ENCODE measurements at regions of chr11 and their contacts with region 1.

Region 1: GRCh38 chr11:6637871-6638270 is 17.7 kb downstream of the DCHS1 start:
- DNase-seq: no peak

Region 2: GRCh38 chr11:6596239-6596877 is 41.5 kb before region 1 on chr11:
- intact Hi-C with region 1: loop called in 1 of 2 experiments (anchors 1 kb)
- DNase-seq: no peak

Region 3: DNA sequence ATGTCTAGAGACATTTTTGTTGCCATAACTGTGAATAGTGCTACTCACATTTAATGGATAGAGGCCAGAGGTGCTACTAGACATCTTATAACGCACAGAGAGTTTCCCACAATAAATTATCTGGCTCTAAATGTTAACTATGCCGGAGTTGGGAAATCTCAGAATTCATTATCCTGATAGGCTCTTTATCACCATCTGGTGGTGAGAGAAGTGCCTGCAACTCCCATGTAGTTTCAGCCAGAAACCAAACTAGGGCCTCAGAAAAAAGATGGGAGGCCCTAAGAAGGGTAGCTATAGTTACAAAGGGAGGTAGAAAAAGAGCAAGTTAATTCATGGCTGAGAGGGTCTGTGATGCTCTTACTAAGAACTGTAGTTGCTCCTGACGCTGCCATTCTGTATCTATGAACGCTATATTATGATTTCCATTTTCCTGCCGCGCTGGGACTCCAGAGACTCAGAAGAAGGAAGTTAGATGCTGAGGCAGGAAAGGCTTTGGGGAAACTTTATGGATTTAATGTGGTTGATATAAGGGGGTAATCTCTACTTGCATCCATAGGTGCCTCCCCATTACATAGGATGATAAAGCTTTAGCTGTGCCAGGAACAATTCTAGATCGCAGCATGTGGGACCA is 68.1 kb after region 1 on chr11:
- intact Hi-C with region 1: no loop called
- DNase-seq: no peak

Region 4: DNA sequence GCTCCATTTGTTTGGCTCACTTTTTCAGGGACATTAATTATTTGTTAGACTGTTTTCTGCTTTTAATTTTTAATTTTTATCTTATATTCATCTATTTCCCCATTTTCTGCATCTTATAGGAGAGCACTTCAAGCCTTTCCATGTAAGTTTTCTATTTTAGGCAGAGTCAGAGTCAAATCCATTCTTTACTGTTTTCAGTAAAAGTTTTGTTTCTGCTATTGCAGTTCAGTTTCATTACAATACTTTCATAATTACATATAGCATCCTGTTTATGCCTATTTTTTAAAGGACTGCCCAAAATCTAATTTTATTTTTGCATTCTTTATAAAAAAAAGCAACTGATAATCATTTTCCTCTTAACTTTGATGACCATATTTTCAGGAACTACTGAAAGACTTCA is 203.8 kb after region 1 on chr11:
- intact Hi-C with region 1: no loop called
- DNase-seq: no peak

Region 5: GRCh38 chr11:7638710-7639642 is 1001.1 kb after region 1 on chr11:
- intact Hi-C with region 1: no loop called
- DNase-seq: no peak

Measured in posterior vena cava (tissue), 2 donors.